Activated T-helper 1 cell treated with anti-CD3 and anti-CD28 coated beads, Interleukin-12 subunit alpha, Interleukin-12 subunit beta, Interleukin-2, Interleukin-4 antibody, amounts not matched to agents 30 ng/mL and 10 ng/mL and 1 ng/mL, durations not matched to agents 14 hours and 24 hours and 36 hours (primary cell): ENCODE measurements at regions of chr2 and their contacts with region 1.

Region 1: GRCh38 chr2:147989809-147990403 is 30.6 kb downstream of the ORC4 start:
- DNase-seq: no peak
- H3K4me3 Mint-ChIP-seq: no peak overlapping the region
- H3K27ac Mint-ChIP-seq: no peak overlapping the region
- H3K4me1 Mint-ChIP-seq: peaks cover 6% of the 10 kb centered on the region
- H3K27me3 Mint-ChIP-seq: no peaks in the 10 kb centered on the region

Region 2: GRCh38 chr2:147910990-147911473 is 78.9 kb before region 1 on chr2:
- intact Hi-C with region 1: no loop called
- DNase-seq: peak; percentile 4
- H3K4me3 Mint-ChIP-seq: no peak overlapping the region
- H3K27ac Mint-ChIP-seq: no peak overlapping the region
- H3K4me1 Mint-ChIP-seq: peaks cover 11% of the 10 kb centered on the region
- H3K27me3 Mint-ChIP-seq: peaks cover 2% of the 10 kb centered on the region

Region 3: DNA sequence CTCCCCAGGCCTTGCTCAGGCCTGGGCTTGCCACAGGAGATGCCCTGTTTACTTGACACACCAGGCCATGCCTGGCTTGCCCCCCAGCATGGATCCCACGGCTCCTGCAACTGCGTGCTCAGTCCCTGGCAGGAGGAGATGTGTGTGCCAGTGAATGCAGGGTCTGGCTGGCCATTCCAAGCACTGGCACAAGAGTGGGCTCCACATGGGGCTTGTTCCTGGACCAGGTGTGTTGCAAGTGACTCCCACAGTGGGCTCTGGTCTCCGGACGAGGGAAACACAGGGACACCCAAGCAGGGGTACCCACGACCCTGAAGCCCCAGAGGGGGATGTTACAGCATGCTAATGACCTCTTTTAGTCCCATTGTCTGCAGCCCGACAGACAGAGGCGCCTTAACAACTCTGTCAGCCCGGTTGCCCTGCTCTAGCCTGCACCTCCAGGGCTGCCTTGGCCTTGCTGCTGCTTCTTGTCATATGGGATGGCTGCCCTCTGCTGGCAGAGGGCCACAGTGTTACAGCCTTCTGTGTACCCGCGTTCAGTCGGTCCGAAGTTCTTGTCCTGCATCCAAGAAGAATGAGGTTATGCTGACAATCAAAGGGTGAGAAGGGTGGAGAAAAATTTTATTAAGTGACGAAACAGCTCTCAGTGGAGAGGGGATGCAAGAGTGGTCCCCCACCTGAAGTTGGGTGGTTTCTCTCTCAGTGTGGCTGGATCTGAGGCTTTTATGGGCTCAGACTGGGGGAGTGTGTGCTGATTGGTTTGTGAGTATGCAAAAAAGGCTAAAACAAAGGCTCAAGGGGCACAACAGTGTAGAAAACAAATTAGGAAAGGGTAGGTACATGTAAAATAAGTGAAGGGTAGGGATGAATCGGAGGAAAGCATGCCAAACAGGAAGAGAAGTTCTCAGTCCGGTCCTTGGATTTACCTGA is 211.4 kb after region 1 on chr2:
- intact Hi-C with region 1: loop called (anchors 1 kb)
- DNase-seq: peak; percentile 13
- H3K4me3 Mint-ChIP-seq: no peak overlapping the region
- H3K27ac Mint-ChIP-seq: no peak overlapping the region
- H3K4me1 Mint-ChIP-seq: no peaks in the 10 kb centered on the region
- H3K27me3 Mint-ChIP-seq: no peaks in the 10 kb centered on the region